ENCODE measurements at regions of chr16 and their contacts with region 1.

Region 1: DNA sequence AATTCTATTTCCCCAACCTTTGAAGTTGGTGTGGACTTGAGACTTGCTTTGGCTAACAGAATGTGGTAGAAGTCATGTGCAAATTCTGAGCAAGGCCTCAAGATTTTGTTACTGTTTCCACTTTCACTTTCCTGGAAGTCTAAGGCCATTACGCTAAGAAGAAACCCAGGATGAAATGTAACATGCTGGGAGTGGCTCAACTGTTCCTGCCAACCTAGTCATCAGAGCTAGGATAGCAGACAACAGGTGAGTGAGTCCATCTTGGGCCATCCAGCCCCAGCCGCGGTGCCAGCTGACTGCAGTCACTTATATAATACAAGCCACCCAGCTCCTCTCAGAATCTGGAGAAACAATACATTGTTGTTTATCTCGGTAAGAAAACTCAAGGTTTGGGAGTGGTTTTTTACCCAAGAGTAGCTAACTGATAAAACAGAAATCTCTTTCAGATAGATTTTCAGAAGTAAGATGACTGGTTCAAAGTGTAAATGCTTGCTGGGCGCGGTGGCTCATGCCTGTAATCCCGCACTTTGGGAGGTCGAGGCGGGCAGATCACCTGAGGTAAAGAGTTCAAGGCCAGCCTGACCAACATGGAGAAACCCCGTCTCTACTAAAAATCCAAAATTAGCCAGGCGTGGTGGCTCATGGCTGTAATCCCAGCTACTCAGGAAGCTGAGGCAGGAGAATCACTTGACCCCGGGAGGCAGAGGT is 10.7 kb upstream of the STX4 start:
- DNase-seq: no peak

Region 2: GRCh38 chr16:31042866-31043265 is 20.2 kb after region 1 on chr16:
- intact Hi-C with region 1: loop called (anchors 2 kb)
- DNase-seq: no peak

Region 3: GRCh38 chr16:31142109-31143010 is 119.7 kb after region 1 on chr16:
- intact Hi-C with region 1: no loop called
- DNase-seq: peak; percentile 99

Measured in cardiac septum (tissue), 1 donor.